GM13977 (cell line): ENCODE measurements at regions of chr16 and their contacts with region 1.

Region 1: DNA sequence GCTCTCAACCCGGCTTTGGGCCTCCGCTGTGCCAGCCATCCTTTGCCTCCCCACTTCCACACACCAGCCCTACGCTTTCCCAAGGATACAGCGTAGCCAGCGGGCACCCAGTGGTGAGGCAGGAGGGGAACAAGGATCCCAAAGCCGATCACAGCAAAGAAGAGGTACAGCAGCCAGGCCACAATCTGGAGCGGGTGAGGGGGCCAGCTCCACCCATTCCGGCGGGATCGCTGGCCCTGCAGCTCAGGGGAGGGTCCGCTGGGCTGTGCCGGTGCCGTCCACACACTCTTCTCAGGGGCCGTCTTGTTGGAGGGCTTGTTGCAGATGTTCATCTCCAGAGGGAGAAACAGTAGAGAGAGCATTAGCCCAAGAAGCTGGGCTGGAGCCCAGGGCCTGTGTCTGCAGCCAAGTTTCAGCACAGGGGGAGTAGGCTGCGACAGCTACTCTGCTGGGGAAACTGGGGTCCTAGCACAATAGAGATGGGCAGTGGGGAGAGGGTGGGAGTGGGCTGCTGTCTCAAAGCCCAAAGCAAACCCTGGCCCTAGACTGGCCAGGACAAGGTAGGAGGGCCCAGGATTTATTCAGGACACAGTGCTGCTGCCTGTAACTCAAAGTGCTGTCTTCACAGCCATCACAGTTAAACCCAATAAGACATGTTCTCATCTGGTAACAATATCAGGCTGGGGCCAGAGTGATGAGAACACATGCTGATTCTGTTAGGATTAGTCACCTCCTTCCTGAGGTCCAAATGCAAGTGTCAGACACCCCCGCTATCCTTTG is 10.0 kb downstream of the ZDHHC1 start:
- DNase-seq: no peak
- CTCF ChIP-seq: no peak

Region 2: GRCh38 chr16:66844342-66845079 is 561.8 kb before region 1 on chr16 and contains the start of gene CA7:
- in situ Hi-C with region 1: no loop called
- DNase-seq: no peak
- CTCF ChIP-seq: no peak

Region 3: GRCh38 chr16:67260426-67261075 is 145.8 kb before region 1 on chr16:
- in situ Hi-C with region 1: loop called (anchors 10 kb)
- DNase-seq: peak; percentile 78
- CTCF ChIP-seq: peak; percentile 69

Region 4: GRCh38 chr16:67571981-67572431 is 165.7 kb after region 1 on chr16:
- in situ Hi-C with region 1: no loop called
- DNase-seq: no peak
- CTCF ChIP-seq: no peak

Region 5: GRCh38 chr16:67767953-67768352 is 361.7 kb after region 1 on chr16:
- in situ Hi-C with region 1: no loop called
- DNase-seq: no peak
- CTCF ChIP-seq: no peak